ENCODE measurements at regions of chr9 and their contacts with region 1.

Region 1: GRCh38 chr9:121121582-121122087 is 46.9 kb downstream of the CNTRL start:
- DNase-seq: peak; percentile 90 to 97 (median 92)
- ATAC-seq: peak; percentile 100
- H3K4me3 ChIP-seq: peak overlapping the region; percentile 37
- H3K27ac ChIP-seq: peak overlapping the region; percentile 74
- H3K4me1 ChIP-seq: peaks cover 0 to 5% of the 10 kb centered on the region in 2 experiments; a peak in 2 of 5 replicates
- H3K27me3 ChIP-seq: no peaks in the 10 kb centered on the region
- CTCF ChIP-seq: peak; percentile 27 to 33 (median 27); a peak in 2 of 6 replicates
- EP300 ChIP-seq: 0 out of 2 replicates have a peak, but pooled peaks have one; percentile 10
- POLR2A ChIP-seq: peak; percentile 75
- RAD21 ChIP-seq: 0 out of 4 replicates have a peak, but pooled peaks of 1 of the 2 experiments have one; percentile 13

Region 2: DNA sequence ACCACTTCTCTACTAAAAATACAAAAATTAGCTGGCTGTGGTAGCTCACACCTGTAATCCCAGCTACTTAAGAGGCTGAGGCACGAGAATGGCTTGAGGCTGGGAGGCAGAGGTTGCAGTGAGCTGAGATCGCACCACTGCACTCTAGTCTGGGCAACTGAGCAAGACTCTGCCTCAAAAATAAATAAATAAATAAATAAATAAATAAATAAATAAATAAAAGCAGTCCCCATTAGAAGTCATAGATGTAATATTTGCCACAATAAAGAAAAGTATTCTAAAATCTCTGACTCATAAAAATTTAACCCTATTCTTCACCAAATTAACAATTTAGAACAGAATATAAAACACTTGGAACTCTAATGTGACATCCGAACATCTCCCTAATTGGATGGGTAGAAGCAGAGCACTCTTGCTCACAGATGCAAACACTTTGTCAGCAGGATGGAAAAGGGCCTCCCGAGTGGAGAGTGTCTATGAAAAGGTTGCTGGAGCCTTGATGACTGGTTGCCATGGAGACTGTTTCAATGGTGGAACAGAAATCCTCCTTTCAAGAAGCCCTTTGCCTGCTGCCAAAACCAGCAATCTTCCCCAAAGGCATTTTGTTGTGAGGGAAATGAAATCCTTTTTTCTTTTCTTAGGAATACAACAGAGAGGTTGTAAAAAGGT is 156.2 kb before region 1 on chr9:
- CTCF ChIA-PET with region 1: no interaction called
- POLR2A ChIA-PET with region 1: no interaction called
- in situ Hi-C with region 1: no loop called
- intact Hi-C with region 1: no loop called
- DNase-seq: no peak
- ATAC-seq: no peak
- H3K4me3 ChIP-seq: no peak overlapping the region
- H3K27ac ChIP-seq: no peak overlapping the region
- H3K4me1 ChIP-seq: no peaks in the 10 kb centered on the region
- H3K27me3 ChIP-seq: peaks cover 24 to 28% of the 10 kb centered on the region in 2 experiments
- CTCF ChIP-seq: no peak
- EP300 ChIP-seq: no peak
- POLR2A ChIP-seq: no peak
- RAD21 ChIP-seq: no peak

Region 3: GRCh38 chr9:120985810-120986222 is 135.8 kb before region 1 on chr9:
- CTCF ChIA-PET with region 1: interaction called, 5 read pairs
- POLR2A ChIA-PET with region 1: no interaction called
- in situ Hi-C with region 1: no loop called
- intact Hi-C with region 1: loop called (anchors 10 kb)
- DNase-seq: peak; percentile 25 to 68 (median 28)
- ATAC-seq: peak; percentile 80
- H3K4me3 ChIP-seq: no peak overlapping the region
- H3K27ac ChIP-seq: no peak overlapping the region
- H3K4me1 ChIP-seq: peaks cover 0 to 13% of the 10 kb centered on the region in 2 experiments; a peak in 3 of 5 replicates
- H3K27me3 ChIP-seq: no peaks in the 10 kb centered on the region
- CTCF ChIP-seq: peak; percentile 41 to 79 (median 65); a peak in 5 of 6 replicates
- EP300 ChIP-seq: peak; percentile 32; the same call in 1 of the 2 replicates
- POLR2A ChIP-seq: no peak
- RAD21 ChIP-seq: peak; percentile 72 to 75

Region 4: GRCh38 chr9:121026260-121026691 is 95.4 kb before region 1 on chr9:
- CTCF ChIA-PET with region 1: no interaction called
- POLR2A ChIA-PET with region 1: no interaction called
- in situ Hi-C with region 1: no loop called
- intact Hi-C with region 1: loop called (anchors 5 kb)
- DNase-seq: no peak
- ATAC-seq: no peak
- H3K4me3 ChIP-seq: no peak overlapping the region
- H3K27ac ChIP-seq: no peak overlapping the region
- H3K4me1 ChIP-seq: no peaks in the 10 kb centered on the region
- H3K27me3 ChIP-seq: 0 out of 5 replicates have a peak, but pooled peaks cover 0 to 3% of the 10 kb centered on the region in 2 experiments
- CTCF ChIP-seq: no peak
- EP300 ChIP-seq: no peak
- POLR2A ChIP-seq: no peak
- RAD21 ChIP-seq: no peak

Region 5: DNA sequence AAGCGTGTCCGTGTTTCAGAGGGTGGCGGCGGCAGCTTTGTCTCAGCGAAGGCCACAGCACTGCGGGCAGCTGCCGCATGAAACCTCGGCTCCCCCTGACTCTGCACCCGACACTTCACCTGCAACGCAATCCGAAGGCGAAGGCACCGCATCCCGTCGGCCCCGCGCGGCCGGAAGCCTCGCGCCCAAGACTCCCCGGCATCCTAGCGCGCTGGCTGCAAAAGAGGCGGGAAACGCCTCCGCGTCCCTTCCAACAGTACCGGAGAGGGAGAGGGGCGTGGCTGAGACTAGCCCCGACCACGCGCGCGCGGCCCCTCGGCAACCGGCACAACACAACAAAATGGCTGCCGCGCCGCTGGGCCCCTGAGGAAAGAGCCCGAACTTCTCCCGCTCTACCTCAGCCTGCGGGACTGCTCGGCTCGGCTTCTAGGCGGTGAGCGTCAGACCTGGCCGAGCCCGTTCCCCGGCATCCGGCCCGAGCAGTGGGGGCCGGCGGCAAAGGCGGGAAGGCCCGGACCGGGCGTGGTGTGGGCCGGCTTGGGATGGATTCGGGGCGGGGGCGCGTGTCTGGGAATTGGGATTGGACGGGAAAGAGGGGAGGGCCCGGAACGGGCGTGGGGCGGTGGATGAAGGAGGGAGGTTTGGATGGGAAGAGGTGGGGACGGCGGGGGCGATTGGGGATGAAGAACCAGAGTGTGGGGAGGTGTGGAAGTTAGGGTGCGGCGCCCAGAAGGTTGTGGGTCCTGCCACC is 46.8 kb before region 1 on chr9 and contains the start of gene CNTRL:
- CTCF ChIA-PET with region 1: no interaction called
- POLR2A ChIA-PET with region 1: interaction called, 3 read pairs
- in situ Hi-C with region 1: no loop called
- intact Hi-C with region 1: loop called (anchors 2 kb)
- DNase-seq: peak; percentile 86 to 95 (median 86)
- ATAC-seq: peak; percentile 94
- H3K4me3 ChIP-seq: peak within 1 kb of the TSS; percentile 81
- H3K27ac ChIP-seq: peak within 1 kb of the TSS; percentile 93
- H3K4me1 ChIP-seq: peaks cover 7 to 20% of the 10 kb centered on the region in 2 experiments; a peak in 4 of 5 replicates
- H3K27me3 ChIP-seq: no peaks in the 10 kb centered on the region
- CTCF ChIP-seq: no peak
- EP300 ChIP-seq: no peak
- POLR2A ChIP-seq: peak; percentile 90
- RAD21 ChIP-seq: no peak
- polyA plus RNA-seq, gene CNTRL: 9.2 to 10.5 TPM

Region 6: GRCh38 chr9:121107041-121107440 is 14.6 kb before region 1 on chr9:
- CTCF ChIA-PET with region 1: no interaction called
- POLR2A ChIA-PET with region 1: interaction called, 10 read pairs
- in situ Hi-C with region 1: no loop called
- intact Hi-C with region 1: no loop called
- DNase-seq: peak; percentile 24 to 45 (median 30)
- ATAC-seq: peak; percentile 92
- H3K4me3 ChIP-seq: no peak overlapping the region
- H3K27ac ChIP-seq: no peak overlapping the region
- H3K4me1 ChIP-seq: no peaks in the 10 kb centered on the region; a peak in 2 of 5 replicates
- H3K27me3 ChIP-seq: no peaks in the 10 kb centered on the region
- CTCF ChIP-seq: peak; percentile 32 to 88 (median 67); a peak in 5 of 6 replicates
- EP300 ChIP-seq: no peak
- POLR2A ChIP-seq: no peak
- RAD21 ChIP-seq: peak in 1 of 2 experiments; percentile 45; a peak in 2 of 4 replicates

Region 7: GRCh38 chr9:121133149-121133816 is 11.6 kb after region 1 on chr9:
- CTCF ChIA-PET with region 1: no interaction called
- POLR2A ChIA-PET with region 1: interaction called, 17 read pairs
- in situ Hi-C with region 1: no loop called
- intact Hi-C with region 1: no loop called
- DNase-seq: peak; percentile 22 to 79 (median 34)
- ATAC-seq: peak; percentile 98
- H3K4me3 ChIP-seq: no peak overlapping the region
- H3K27ac ChIP-seq: no peak overlapping the region; the same call in 2 of the 3 replicates
- H3K4me1 ChIP-seq: peaks cover 5 to 7% of the 10 kb centered on the region in 2 experiments; a peak in 3 of 5 replicates
- H3K27me3 ChIP-seq: no peaks in the 10 kb centered on the region
- CTCF ChIP-seq: no peak
- EP300 ChIP-seq: no peak
- POLR2A ChIP-seq: no peak
- RAD21 ChIP-seq: no peak

Region 8: DNA sequence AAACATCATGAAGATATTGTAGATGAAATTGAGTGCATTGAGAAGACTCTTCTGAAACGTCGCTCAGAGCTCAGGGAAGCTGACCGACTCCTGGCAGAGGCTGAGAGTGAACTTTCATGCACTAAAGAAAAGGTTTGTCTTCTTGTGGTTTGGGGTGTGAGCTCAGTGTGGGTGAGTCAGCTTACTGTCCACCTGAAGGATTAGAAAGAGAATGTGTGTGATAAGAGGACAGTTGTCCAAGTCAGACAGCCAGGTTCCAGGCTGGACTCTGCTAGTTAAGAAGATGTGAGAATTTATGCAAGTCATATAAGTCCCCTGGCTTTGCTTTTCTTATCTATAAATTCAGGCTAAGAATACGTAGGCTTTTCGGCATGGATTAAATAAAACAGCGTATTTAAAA is 33.1 kb after region 1 on chr9:
- CTCF ChIA-PET with region 1: no interaction called
- POLR2A ChIA-PET with region 1: interaction called, 4 read pairs
- in situ Hi-C with region 1: no loop called
- intact Hi-C with region 1: loop called (anchors 2 kb)
- DNase-seq: peak; percentile 44 to 93 (median 70)
- ATAC-seq: peak; percentile 94
- H3K4me3 ChIP-seq: no peak overlapping the region
- H3K27ac ChIP-seq: peak overlapping the region; percentile 46; the same call in 1 of the 3 replicates
- H3K4me1 ChIP-seq: peaks cover 4 to 27% of the 10 kb centered on the region in 2 experiments; a peak in 4 of 5 replicates
- H3K27me3 ChIP-seq: no peaks in the 10 kb centered on the region
- CTCF ChIP-seq: no peak
- EP300 ChIP-seq: peak; percentile 85
- POLR2A ChIP-seq: no peak
- RAD21 ChIP-seq: no peak

Measured in K562 (cell line).